Posterior vena cava (tissue), 2 donors: ENCODE measurements at regions of chr4 and their contacts with region 1.

Region 1: GRCh38 chr4:99054428-99054994 is 34.1 kb downstream of the ADH5 start:
- DNase-seq: no peak

Region 2: GRCh38 chr4:98467627-98468072 is 586.9 kb before region 1 on chr4:
- intact Hi-C with region 1: loop called in 1 of 2 experiments (anchors 10 kb)
- DNase-seq: peak; percentile 85

Region 3: GRCh38 chr4:98939892-98940298 is 114.6 kb before region 1 on chr4:
- intact Hi-C with region 1: loop called in 1 of 2 experiments (anchors 10 kb)
- DNase-seq: no peak

Region 4: DNA sequence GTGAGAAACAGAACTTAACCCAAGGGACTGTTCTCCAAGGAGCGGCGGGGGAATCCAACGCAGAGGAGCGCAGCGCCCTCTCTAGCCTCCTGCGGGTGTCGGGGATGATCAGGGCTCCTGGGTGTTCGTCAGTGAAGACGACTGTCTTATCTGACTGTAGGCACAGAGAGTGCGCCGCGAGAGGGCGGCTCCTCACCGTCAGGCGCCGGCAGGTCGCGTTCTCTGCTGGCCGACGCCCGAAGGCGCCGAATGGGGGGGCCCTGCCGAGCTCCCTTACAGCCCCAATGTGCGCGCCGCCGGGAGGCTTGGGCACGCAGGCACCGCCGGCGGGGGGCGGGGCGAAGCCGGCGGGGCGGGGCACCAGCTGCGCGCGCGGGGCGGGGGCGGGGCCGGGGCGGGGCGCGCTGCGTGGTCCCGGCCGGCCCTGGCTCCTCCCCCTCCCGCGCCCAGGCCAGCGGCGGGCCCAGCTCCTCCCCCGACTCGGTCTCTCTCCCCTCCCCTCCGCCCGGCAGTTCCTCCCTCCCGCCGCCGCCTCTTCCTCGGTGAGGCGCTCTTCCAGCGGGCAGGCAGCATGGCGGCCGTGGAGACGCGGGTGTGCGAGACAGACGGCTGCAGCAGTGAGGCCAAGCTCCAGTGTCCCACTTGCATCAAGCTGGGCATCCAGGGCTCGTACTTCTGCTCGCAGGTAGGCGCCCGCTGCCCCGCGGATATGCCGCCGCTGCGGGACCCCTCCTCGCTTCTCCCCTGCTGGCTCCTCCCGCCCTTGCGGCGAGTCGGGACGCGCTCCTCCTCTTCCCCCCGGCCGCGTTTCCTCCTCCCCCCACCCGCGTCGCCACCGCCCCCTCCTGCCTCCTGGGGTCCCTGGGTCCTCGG is 59.1 kb before region 1 on chr4 and contains the start of gene METAP1:
- intact Hi-C with region 1: loop called (anchors 5 to 10 kb)
- DNase-seq: peak; percentile 97
- total RNA-seq, gene METAP1: 43.3 to 46.1 TPM